CD4-positive, alpha-beta T cell (primary cell): ENCODE measurements at regions of chr1 and their contacts with region 1.

Region 1: GRCh38 chr1:241842565-241842964 is 5.4 kb upstream of the EXO1 start:
- DNase-seq: no peak
- ATAC-seq: no peak
- H3K4me3 ChIP-seq: no peak overlapping the region
- H3K4me3 Mint-ChIP-seq: no peak overlapping the region
- H3K27ac ChIP-seq: no peak overlapping the region
- H3K27ac Mint-ChIP-seq: no peak overlapping the region
- H3K4me1 ChIP-seq: peaks cover 4% of the 10 kb centered on the region
- H3K4me1 Mint-ChIP-seq: peaks cover 6% of the 10 kb centered on the region
- H3K27me3 ChIP-seq: no peaks in the 10 kb centered on the region
- H3K27me3 Mint-ChIP-seq: no peaks in the 10 kb centered on the region
- CTCF ChIP-seq: no peak

Region 2: DNA sequence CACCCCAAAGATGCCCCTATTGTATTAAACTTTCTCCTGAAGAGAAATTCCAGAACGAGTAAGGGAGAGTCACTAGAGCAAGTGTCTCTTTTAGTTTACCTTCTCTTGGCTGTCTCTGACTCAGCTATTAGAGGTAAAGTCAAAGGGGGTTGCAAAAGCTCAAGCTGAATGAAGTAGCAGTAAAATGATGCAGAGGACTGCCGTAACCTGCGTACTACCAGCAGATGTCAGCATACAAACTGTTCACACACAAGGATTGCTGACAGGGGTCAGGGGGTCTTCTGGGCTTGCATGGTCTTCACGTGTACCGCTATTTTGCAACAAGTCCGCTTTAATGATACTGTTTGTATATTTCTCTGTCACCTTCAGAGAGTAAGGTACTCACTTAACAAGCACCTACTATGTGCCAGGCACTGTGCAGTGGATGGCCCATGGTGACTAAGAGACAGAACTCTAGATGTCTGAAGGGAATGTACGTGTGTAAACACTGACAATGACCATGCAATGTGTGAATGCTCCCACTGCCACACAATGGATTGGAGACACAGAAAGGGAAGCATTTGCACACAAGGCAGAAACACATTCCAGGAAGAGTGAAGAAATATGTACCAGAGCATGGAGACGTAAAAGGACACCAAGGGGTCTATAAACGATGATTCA is 237.3 kb before region 1 on chr1:
- CTCF ChIA-PET with region 1: no interaction called
- POLR2A ChIA-PET with region 1: no interaction called
- intact Hi-C with region 1: loop called (anchors 5 kb)
- DNase-seq: peak in 2 of 14 experiments; percentile 6 to 23
- ATAC-seq: no peak
- H3K4me3 ChIP-seq: no peak overlapping the region
- H3K4me3 Mint-ChIP-seq: no peak overlapping the region
- H3K27ac ChIP-seq: no peak overlapping the region
- H3K27ac Mint-ChIP-seq: no peak overlapping the region
- H3K4me1 ChIP-seq: no peaks in the 10 kb centered on the region
- H3K4me1 Mint-ChIP-seq: no peaks in the 10 kb centered on the region
- H3K27me3 ChIP-seq: no peaks in the 10 kb centered on the region
- H3K27me3 Mint-ChIP-seq: no peaks in the 10 kb centered on the region
- CTCF ChIP-seq: no peak